GM12878 (cell line): ENCODE measurements at regions of chr10 and their contacts with region 1.

Region 1: GRCh38 chr10:24617771-24618391 is 105.8 kb downstream of the ARHGAP21 start:
- DNase-seq: no peak
- ATAC-seq: peak; percentile 88
- H3K4me3 ChIP-seq: no peak overlapping the region
- H3K27ac ChIP-seq: no peak overlapping the region
- H3K4me1 ChIP-seq: no peaks in the 10 kb centered on the region
- H3K27me3 ChIP-seq: no peaks in the 10 kb centered on the region
- CTCF ChIP-seq: peak; percentile 73 to 84 (median 80)
- EP300 ChIP-seq: no peak
- POLR2A ChIP-seq: no peak
- RAD21 ChIP-seq: peak; percentile 56

Region 2: GRCh38 chr10:24496906-24497305 is 121.0 kb before region 1 on chr10:
- CTCF ChIA-PET with region 1: no interaction called
- POLR2A ChIA-PET with region 1: no interaction called
- RAD21 ChIA-PET with region 1: no interaction called
- SMC1A ChIA-PET with region 1: no interaction called
- in situ Hi-C with region 1: no loop called
- intact Hi-C with region 1: no loop called
- DNase-seq: no peak
- ATAC-seq: no peak
- H3K4me3 ChIP-seq: no peak overlapping the region
- H3K27ac ChIP-seq: no peak overlapping the region
- H3K4me1 ChIP-seq: no peaks in the 10 kb centered on the region
- H3K27me3 ChIP-seq: no peaks in the 10 kb centered on the region; a peak in 1 of 4 replicates
- CTCF ChIP-seq: no peak
- EP300 ChIP-seq: no peak
- POLR2A ChIP-seq: no peak
- RAD21 ChIP-seq: no peak

Region 3: GRCh38 chr10:24603333-24603732 is 14.5 kb before region 1 on chr10:
- CTCF ChIA-PET with region 1: interaction called, 56 read pairs
- POLR2A ChIA-PET with region 1: no interaction called
- RAD21 ChIA-PET with region 1: interaction called, 3 read pairs
- SMC1A ChIA-PET with region 1: interaction called, 15 read pairs
- in situ Hi-C with region 1: no loop called
- intact Hi-C with region 1: no loop called
- DNase-seq: no peak
- ATAC-seq: no peak
- H3K4me3 ChIP-seq: no peak overlapping the region
- H3K27ac ChIP-seq: no peak overlapping the region
- H3K4me1 ChIP-seq: no peaks in the 10 kb centered on the region
- H3K27me3 ChIP-seq: no peaks in the 10 kb centered on the region
- CTCF ChIP-seq: no peak
- EP300 ChIP-seq: no peak
- POLR2A ChIP-seq: no peak
- RAD21 ChIP-seq: no peak

Region 4: DNA sequence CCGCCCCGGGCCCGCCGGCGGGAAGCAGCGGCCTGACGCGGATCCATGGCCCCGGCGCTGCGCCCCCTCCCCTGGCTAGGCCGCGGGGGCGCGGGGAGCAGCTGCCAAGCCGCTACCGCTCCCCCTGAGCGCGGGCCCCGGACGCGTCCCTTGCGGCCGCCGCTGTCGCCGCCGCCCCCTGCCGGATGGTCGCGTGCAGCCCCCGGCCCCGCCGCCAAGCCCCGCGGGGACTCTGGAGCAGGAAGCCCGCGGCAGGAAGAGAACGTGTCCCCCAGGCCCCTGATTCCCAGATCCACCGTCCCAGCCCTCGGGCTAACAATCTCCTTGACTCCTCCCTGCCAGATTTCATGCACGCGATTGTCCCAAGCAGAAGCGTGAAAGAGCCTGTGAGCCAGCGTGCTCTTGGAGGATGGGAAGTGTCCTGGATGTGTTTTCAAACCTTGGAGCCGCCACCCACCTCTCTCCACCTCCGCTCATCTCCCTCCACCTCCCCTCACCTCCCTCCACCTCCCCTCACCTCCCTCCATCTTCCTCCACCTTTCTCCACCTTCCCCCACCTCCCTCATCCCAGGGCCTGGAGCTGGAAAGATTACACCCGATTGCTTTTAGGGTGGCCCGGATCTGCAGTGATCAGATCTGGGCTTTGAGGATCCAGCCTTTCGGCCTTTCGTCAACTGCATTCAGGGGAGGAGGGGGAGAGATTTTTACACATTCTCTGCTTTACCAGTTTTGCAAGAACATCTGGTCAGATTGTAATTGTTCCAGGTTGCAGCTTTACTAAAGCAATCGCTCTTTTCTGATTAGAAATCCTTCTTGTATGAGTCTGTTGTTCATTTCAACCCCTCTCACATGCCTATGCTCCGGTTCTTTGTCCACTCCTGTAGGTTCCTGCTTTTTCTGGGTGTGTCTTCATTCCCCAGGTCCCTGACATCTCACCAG is 335.1 kb after region 1 on chr10:
- CTCF ChIA-PET with region 1: interaction called, 14 read pairs
- POLR2A ChIA-PET with region 1: no interaction called
- RAD21 ChIA-PET with region 1: interaction called, 4 read pairs
- SMC1A ChIA-PET with region 1: interaction called, 4 read pairs
- in situ Hi-C with region 1: no loop called
- intact Hi-C with region 1: no loop called
- DNase-seq: no peak
- ATAC-seq: peak; percentile 72
- H3K4me3 ChIP-seq: peak overlapping the region; percentile 66; the same call in 1 of the 2 replicates
- H3K27ac ChIP-seq: no peak overlapping the region
- H3K4me1 ChIP-seq: peaks cover under 1% of the 10 kb centered on the region; the same call in 1 of the 2 replicates
- H3K27me3 ChIP-seq: no peaks in the 10 kb centered on the region
- CTCF ChIP-seq: peak; percentile 20 to 53 (median 24); a peak in 4 of 6 replicates
- EP300 ChIP-seq: no peak
- POLR2A ChIP-seq: peak; percentile 51
- RAD21 ChIP-seq: peak; percentile 49

Region 5: DNA sequence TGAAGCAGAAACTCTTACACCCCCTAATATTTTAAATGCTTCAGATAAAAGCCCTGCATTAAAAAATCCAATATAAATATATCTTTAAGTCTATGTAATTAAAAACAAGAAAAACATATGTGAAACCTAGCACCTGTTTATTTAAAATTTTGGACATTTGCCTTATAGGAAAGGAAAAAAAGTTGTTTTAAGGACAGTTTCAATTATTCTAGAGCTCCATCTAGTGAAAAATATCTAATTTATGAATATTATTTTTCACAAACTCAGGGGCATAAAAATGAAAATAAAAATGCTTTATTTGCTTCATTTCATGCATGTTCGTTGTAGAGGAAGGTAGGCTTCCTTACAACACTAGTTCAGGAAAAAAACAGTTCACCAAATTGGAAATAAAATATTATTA is 372.0 kb after region 1 on chr10:
- CTCF ChIA-PET with region 1: interaction called, 79 read pairs
- POLR2A ChIA-PET with region 1: no interaction called
- RAD21 ChIA-PET with region 1: interaction called, 22 read pairs
- SMC1A ChIA-PET with region 1: interaction called, 31 read pairs
- in situ Hi-C with region 1: no loop called
- intact Hi-C with region 1: no loop called
- DNase-seq: no peak
- ATAC-seq: no peak
- H3K4me3 ChIP-seq: no peak overlapping the region
- H3K27ac ChIP-seq: no peak overlapping the region
- H3K4me1 ChIP-seq: no peaks in the 10 kb centered on the region
- H3K27me3 ChIP-seq: no peaks in the 10 kb centered on the region
- CTCF ChIP-seq: no peak; a peak in 1 of 6 replicates
- EP300 ChIP-seq: no peak
- POLR2A ChIP-seq: no peak
- RAD21 ChIP-seq: peak; percentile 8; the same call in 1 of the 2 replicates